Activated naive CD4-positive, alpha-beta T cell treated with anti-CD3 and anti-CD28 coated beads for 36 hours (primary cell): ENCODE measurements at regions of chr5 and their contacts with region 1.

Region 1: DNA sequence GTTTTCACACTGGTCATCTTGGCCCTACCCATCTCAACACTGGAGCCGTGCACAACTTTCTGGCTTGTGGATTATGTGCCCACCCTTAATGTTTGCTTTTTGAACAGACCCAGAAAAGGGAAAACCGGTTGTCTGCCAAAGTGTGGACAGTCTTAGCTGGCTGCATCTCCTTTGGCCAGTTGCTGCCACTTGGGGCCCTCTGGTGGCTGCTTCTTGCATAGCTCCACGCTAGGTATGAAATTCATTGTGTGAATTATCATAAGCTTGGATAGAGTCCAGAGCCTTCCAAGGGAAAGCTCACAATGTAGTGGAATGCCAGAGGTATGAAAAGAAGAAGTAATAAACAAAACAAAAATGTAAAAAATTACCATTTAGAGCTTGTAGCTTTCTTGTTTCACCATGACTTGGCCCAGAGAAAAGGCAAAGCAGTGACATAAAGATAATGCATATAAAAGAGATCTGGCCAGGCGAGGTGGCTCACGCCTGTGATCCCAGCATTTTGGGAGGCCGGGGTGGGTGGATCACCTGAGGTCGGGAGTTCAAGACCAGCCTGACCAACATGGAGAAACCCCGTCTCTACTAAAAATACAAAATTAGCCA is 12.5 kb upstream of the SLC36A3 start:
- DNase-seq: peak; percentile 81
- H3K4me3 Mint-ChIP-seq: no peak overlapping the region
- H3K27ac Mint-ChIP-seq: no peak overlapping the region
- H3K4me1 Mint-ChIP-seq: no peaks in the 10 kb centered on the region
- H3K27me3 Mint-ChIP-seq: no peaks in the 10 kb centered on the region

Region 2: DNA sequence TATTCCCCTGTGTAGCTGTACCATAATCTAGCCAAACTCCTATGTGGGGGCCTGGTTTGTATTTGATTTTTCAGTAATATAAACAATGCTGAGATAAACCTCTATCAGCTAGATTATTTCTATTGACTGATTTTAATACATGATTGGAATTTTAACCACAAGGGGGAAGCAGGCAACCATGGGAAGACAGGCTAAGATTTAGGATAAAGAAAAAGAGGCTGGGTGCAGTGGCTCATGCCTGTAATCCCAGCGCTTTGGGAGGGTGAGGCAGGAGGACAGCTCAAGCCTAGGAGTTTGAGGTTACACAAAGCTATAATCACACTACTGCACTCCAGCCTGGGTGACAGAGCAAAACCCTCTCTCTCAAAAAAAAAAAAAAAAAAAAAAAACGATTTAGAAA is 313.8 kb before region 1 on chr5:
- CTCF ChIA-PET with region 1: no interaction called
- intact Hi-C with region 1: loop called (anchors 10 kb)
- DNase-seq: peak; percentile 29
- H3K4me3 Mint-ChIP-seq: no peak overlapping the region
- H3K27ac Mint-ChIP-seq: no peak overlapping the region
- H3K4me1 Mint-ChIP-seq: no peaks in the 10 kb centered on the region
- H3K27me3 Mint-ChIP-seq: no peaks in the 10 kb centered on the region

Region 3: DNA sequence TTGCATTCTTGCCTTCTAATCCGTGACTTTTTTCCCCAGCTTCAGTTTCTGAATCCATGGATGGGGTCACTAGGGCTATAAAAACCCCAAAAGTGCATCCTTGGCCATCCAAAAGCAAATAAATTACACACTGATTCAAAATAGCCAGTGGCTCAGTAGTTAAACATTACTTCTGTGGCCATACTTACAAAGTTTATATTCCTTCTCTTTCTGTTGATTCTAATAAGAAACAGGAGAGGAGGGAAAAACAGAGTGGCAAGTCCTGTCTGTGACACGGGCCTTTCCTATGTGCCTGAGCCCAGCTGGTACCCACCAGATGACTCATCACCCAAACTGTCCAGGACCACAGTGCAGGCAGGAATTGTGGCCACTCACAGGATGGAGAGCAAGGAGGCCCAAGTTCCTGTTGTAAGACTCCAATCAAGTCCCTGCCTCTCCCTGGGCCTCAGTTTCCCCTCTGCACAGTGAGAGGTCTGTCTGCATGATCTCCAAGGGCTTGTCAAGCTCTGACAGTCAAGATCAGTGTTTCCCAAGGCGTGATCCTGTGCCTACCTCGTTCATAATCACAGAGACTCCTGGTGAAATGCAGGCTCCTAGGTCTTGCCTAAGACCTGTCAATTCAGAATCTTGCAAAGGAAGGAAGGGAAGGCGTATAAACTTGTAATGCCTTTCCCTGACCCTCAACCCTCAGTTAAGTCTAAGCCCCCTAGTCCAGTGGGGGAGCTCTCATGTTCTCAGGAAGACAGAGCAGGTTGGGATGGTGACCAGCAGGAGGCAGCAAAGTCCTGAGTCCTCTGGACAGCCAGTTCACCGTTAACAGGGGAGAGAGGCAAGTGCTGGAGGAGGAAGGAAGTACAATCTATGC is 264.8 kb before region 1 on chr5:
- CTCF ChIA-PET with region 1: interaction called, 3 read pairs
- intact Hi-C with region 1: loop called (anchors 5 kb)
- DNase-seq: peak; percentile 85
- H3K4me3 Mint-ChIP-seq: no peak overlapping the region
- H3K27ac Mint-ChIP-seq: peak overlapping the region; percentile 16
- H3K4me1 Mint-ChIP-seq: no peaks in the 10 kb centered on the region
- H3K27me3 Mint-ChIP-seq: no peaks in the 10 kb centered on the region

Region 4: DNA sequence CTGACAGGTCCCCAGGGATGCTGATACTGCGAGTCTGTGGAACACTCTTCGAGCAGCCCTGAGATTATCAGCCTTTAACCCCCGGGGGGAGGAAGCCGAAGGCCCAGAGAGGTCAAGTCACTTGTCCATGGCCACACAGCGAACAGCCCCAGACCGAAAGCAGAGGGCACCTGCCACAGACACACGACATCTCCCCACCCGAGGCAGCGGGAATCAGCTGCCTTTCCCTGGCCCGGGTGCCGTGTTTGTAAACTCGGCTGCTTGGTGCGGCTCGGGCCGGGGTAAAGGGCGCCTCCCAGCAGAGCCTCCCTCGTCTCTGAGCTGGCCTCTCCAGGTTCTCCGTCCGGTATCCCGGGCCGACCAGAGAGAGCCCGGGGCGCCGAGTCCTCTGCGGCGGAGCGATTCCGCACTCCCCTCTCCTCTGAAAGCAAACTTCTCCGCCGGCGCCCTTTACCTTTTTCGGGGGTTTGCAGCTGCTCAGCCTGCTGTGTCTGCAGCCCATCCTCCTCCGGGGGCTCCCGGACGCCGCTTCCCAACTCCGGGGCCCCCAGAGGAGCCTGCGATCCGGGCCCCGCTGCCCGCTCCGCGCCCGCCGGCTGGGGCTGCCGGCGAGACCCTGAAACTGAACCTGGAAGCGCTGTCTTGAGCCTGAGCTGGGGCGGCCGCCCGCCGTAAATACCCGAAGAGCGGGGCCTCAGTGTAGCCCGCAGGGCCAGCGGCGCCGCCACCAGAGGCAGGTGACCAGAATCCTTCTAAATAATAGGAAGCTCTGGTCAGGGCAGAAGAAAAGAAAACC is 92.4 kb before region 1 on chr5 and contains the start of gene CCDC69:
- CTCF ChIA-PET with region 1: no interaction called
- intact Hi-C with region 1: loop called (anchors 2 kb)
- DNase-seq: peak; percentile 59
- H3K4me3 Mint-ChIP-seq: peak within 1 kb of the TSS; percentile 85
- H3K27ac Mint-ChIP-seq: peak within 1 kb of the TSS; percentile 93
- H3K4me1 Mint-ChIP-seq: peaks cover 56% of the 10 kb centered on the region
- H3K27me3 Mint-ChIP-seq: no peaks in the 10 kb centered on the region
- total RNA-seq, gene CCDC69: 15.5 to 18.5 TPM

Region 5: DNA sequence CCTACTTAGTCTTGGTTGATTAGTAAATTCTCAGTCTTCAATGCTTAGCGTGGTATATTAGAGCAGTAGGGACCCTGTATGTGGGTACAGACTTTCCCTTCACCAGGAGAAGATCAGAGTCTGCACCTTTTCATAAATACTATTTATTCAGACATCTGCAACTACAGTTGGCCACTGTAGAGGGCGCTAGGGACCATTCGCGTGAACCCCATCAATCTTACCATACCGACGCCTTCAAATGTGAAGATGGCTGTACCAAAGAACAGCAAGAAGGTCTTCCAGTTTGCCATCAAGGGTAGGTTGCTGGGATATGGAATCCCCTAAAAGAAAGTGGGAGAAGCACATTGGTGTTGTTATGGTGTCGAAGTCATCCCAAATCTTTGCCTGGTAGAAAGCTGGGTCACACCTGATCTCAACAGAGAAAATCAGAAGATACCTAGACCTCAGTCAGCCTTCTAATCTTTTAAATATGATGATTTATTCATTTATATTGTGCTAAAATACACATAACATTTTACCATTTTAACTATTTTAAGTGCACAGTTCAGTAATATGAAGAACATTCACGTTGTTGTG is 31.6 kb before region 1 on chr5:
- CTCF ChIA-PET with region 1: interaction called, 9 read pairs
- intact Hi-C with region 1: loop called (anchors 2 kb)
- DNase-seq: peak; percentile 30
- H3K4me3 Mint-ChIP-seq: no peak overlapping the region
- H3K27ac Mint-ChIP-seq: no peak overlapping the region
- H3K4me1 Mint-ChIP-seq: no peaks in the 10 kb centered on the region
- H3K27me3 Mint-ChIP-seq: no peaks in the 10 kb centered on the region

Region 6: DNA sequence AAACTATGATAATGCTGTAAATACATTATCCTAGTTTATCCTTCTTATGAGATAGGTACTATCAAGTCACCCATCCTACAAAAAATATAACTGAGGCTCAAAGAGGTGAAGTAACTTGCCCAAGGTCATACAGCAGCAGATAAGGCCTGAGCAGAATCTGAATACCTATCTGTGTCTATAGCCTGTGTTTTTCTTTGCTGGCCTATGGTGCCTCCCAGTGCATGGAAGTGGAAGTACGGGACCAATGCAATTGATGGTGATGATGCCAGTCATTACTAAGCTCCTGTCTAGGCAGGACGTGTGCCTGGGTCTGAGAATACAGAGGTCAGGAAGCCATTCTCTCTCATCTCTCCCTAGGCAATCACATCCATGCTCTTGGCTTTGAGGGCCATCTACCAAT is 207.2 kb after region 1 on chr5:
- CTCF ChIA-PET with region 1: no interaction called
- intact Hi-C with region 1: loop called (anchors 1 kb)
- DNase-seq: peak; percentile 78
- H3K4me3 Mint-ChIP-seq: no peak overlapping the region
- H3K27ac Mint-ChIP-seq: no peak overlapping the region
- H3K4me1 Mint-ChIP-seq: peaks cover 5% of the 10 kb centered on the region
- H3K27me3 Mint-ChIP-seq: no peaks in the 10 kb centered on the region